ENCODE measurements at regions of chr3 and their contacts with region 1.

Region 1: DNA sequence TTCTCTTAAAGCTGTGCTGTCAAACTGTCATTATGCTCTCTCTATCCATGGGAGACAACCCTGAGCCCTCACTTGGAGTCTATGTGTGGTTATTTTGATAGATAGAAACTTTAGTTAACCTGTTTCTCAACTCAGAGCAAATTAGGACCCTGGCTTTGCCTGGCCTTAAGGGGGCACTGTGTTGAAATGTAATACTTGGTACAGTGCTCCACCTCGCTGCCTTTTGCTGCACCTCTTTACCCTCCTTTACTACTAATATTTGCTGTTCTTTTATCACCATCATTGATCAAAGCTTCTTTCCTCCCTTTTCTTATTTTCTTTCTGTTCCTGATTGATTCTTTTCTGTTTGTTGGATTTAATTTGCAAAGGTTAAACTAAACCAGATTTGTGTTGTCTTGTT is 34.3 kb downstream of the STT3B start:
- DNase-seq: peak; percentile 54
- H3K4me3 Mint-ChIP-seq: no peak overlapping the region
- H3K27ac Mint-ChIP-seq: no peak overlapping the region
- H3K4me1 Mint-ChIP-seq: peaks cover 82% of the 10 kb centered on the region
- H3K27me3 Mint-ChIP-seq: no peaks in the 10 kb centered on the region

Region 2: DNA sequence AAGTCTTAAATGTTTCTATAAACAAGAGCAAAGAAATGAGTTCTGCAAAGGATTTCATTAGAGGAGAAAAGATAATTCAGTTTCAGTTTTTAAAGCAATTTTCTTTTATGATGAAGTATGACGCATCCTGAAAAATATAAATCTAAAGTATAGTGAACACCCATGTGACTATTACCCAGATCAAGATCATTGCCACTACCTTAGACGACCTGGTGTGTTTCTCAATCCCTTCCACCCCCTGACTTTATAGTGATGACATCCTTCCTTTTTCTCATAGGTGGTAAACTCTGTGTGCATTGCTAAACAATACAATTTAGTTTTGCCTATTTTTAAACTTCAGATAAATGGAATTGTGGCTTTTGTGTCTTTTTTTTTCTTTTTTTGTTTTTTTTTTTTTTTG is 25.9 kb before region 1 on chr3:
- CTCF ChIA-PET with region 1: interaction called, 3 read pairs
- intact Hi-C with region 1: loop called (anchors 2 kb)
- DNase-seq: peak; percentile 52
- H3K4me3 Mint-ChIP-seq: no peak overlapping the region
- H3K27ac Mint-ChIP-seq: peak overlapping the region; percentile 36
- H3K4me1 Mint-ChIP-seq: peaks cover 90% of the 10 kb centered on the region
- H3K27me3 Mint-ChIP-seq: no peaks in the 10 kb centered on the region

Region 3: DNA sequence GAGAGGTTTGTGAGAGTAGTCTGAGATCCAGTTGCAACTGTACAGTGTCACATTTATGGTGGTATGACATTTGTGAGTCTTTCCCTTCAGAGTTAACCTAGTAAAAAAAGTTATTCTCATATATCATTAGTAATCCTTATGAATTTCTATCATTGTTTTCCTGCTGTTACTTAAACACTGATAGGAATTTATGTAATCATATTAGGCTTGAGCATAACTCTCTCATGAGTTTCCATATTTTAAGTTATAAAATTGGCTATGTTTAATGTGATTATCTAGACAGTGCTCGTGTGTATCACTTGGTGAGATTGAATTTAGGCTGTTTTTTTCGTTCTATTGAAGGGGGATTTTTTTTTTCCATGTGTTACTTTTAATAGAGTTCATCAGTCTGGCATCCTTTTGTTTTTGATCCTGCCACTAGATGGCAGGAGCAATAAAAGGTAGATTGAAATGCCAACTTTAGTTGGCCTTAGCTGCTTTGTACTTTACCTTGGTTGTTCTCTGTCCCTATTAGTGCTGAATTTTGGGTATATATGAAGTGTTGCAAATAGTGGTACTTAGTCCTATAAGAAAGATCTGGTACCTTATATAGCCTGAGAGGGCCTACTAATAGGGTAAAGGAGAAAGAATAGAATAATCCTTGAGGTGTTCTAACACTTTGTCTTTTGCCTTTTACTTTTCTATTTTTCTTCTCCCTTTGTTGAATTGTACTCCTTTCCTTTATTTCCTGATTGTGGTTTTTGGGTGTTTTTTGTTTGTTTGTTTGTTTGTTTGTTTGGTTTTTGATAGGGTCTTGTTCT is 16.4 kb before region 1 on chr3:
- CTCF ChIA-PET with region 1: interaction called, 6 read pairs
- intact Hi-C with region 1: loop called (anchors 1 kb)
- DNase-seq: peak; percentile 32
- H3K4me3 Mint-ChIP-seq: no peak overlapping the region
- H3K27ac Mint-ChIP-seq: peak overlapping the region; percentile 48
- H3K4me1 Mint-ChIP-seq: peaks cover 77% of the 10 kb centered on the region
- H3K27me3 Mint-ChIP-seq: no peaks in the 10 kb centered on the region

Region 4: GRCh38 chr3:31581660-31582059 is 14.6 kb after region 1 on chr3:
- CTCF ChIA-PET with region 1: interaction called, 4 read pairs
- intact Hi-C with region 1: loop called (anchors 2 kb)
- DNase-seq: no peak
- H3K4me3 Mint-ChIP-seq: no peak overlapping the region
- H3K27ac Mint-ChIP-seq: peak overlapping the region; percentile 51
- H3K4me1 Mint-ChIP-seq: peaks cover 74% of the 10 kb centered on the region
- H3K27me3 Mint-ChIP-seq: no peaks in the 10 kb centered on the region

Region 5: GRCh38 chr3:31634481-31634880 is 67.4 kb after region 1 on chr3:
- CTCF ChIA-PET with region 1: no interaction called
- intact Hi-C with region 1: loop called (anchors 2 kb)
- DNase-seq: no peak
- H3K4me3 Mint-ChIP-seq: no peak overlapping the region
- H3K27ac Mint-ChIP-seq: peak overlapping the region; percentile 24
- H3K4me1 Mint-ChIP-seq: peaks cover 41% of the 10 kb centered on the region
- H3K27me3 Mint-ChIP-seq: no peaks in the 10 kb centered on the region

Region 6: GRCh38 chr3:31695280-31696008 is 128.4 kb after region 1 on chr3:
- CTCF ChIA-PET with region 1: no interaction called
- intact Hi-C with region 1: loop called (anchors 5 kb)
- DNase-seq: peak; percentile 68
- H3K4me3 Mint-ChIP-seq: no peak overlapping the region
- H3K27ac Mint-ChIP-seq: no peak overlapping the region
- H3K4me1 Mint-ChIP-seq: no peaks in the 10 kb centered on the region
- H3K27me3 Mint-ChIP-seq: no peaks in the 10 kb centered on the region

Region 7: DNA sequence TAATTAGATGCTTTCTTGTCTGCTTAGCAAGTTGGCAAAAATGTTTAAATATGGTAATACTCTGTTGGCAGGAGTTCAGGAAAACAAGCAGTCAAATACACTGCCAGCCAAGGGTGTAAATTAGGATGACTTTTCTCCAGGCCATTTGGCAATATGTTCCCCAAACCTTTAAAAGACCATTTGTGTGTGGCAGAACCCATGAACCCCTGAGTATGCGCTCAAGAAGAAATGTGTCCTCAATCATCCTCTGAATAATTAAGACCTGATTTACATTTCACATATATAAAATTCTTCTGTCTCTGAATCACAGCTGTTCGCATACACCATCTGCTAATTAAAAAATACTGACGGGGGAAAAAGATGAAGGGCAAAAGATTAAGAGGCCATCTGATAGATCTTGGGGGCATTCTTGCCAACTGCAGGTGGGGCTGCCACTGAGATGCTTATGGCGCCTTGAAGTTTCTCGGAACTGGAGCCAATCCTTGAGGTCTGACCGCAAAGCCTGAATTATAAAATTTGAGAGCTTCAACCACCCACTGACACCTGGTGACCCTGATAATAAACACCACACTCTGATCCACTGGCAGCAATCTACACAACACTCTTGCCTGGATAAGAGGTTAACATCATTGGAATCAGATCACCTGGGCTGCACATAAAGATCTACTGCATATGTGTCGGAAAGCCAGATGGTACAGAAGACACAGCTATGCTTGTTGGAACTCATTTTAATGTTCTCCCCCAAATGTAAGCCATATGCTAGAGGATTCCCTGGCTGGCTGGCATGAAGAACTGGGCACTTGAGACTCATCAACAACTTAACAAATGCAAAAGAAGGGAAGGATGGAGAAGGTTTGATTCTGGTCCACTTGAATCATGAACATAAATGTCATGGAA is 223.4 kb after region 1 on chr3:
- CTCF ChIA-PET with region 1: no interaction called
- intact Hi-C with region 1: no loop called
- DNase-seq: no peak
- H3K4me3 Mint-ChIP-seq: no peak overlapping the region
- H3K27ac Mint-ChIP-seq: no peak overlapping the region
- H3K4me1 Mint-ChIP-seq: no peaks in the 10 kb centered on the region
- H3K27me3 Mint-ChIP-seq: peaks cover 3% of the 10 kb centered on the region

Measured in activated naive CD4-positive, alpha-beta T cell treated with anti-CD3 and anti-CD28 coated beads for 36 hours (primary cell).